Cardiac septum (tissue), 1 donor: ENCODE measurements at regions of chr6 and their contacts with region 1.

Region 1: DNA sequence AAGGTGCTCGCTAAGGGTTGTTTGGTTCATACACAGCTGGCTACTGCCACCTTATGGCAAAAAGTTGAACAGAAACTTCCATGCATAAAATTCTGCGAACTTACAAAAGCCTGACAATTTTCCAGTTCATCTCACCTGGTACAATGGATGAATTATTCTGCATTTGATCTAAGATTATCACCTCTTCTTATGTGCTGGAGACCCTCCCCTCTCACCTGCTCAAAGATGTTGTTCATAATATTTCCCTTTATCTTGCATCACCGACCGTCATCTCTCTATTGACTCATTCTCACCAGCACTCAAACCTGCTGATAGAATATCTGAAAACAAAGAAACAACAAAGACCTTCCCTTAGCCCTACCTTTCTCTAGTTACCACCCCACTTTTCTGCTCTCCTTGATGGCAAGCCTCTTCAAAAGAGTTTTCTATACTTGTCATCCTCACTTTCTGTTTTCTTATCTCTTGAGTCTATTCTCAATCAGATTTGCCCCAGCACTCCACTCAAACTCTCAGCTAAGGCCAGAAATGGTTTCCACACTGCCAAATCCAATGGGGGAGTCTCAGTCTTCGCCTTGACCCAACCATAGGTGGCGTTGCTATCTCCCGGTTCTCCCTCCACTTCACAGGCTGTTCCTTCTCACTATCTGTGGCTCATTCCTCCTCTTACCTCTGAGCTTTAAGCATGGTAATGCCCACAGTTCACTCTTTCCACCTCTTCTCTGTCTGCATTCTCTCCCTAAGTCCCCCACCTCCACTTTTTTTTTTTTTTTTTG is 25.8 kb downstream of the SNRNP48 start:
- DNase-seq: no peak

Region 2: GRCh38 chr6:7276199-7276524 is 339.6 kb before region 1 on chr6:
- intact Hi-C with region 1: loop called (anchors 5 kb)
- DNase-seq: no peak

Region 3: GRCh38 chr6:7424967-7425807 is 190.6 kb before region 1 on chr6:
- intact Hi-C with region 1: loop called (anchors 5 kb)
- DNase-seq: no peak